ENCODE measurements at regions of chr6 and their contacts with region 1.

Region 1: GRCh38 chr6:39361657-39362486 is 39.4 kb upstream of the KCNK16 start:
- DNase-seq: peak; percentile 70 to 83 (median 78)
- H3K4me3 ChIP-seq: no peak overlapping the region
- H3K27ac ChIP-seq: peak overlapping the region in 2 of 5 donors; percentile 19 to 64
- H3K4me1 ChIP-seq: peaks cover 2 to 3% of the 10 kb centered on the region in 2 donors
- H3K27me3 ChIP-seq: no peaks in the 10 kb centered on the region
- CTCF ChIP-seq: peak; percentile 59 to 85 (median 75)
- POLR2A ChIP-seq: no peak

Region 2: DNA sequence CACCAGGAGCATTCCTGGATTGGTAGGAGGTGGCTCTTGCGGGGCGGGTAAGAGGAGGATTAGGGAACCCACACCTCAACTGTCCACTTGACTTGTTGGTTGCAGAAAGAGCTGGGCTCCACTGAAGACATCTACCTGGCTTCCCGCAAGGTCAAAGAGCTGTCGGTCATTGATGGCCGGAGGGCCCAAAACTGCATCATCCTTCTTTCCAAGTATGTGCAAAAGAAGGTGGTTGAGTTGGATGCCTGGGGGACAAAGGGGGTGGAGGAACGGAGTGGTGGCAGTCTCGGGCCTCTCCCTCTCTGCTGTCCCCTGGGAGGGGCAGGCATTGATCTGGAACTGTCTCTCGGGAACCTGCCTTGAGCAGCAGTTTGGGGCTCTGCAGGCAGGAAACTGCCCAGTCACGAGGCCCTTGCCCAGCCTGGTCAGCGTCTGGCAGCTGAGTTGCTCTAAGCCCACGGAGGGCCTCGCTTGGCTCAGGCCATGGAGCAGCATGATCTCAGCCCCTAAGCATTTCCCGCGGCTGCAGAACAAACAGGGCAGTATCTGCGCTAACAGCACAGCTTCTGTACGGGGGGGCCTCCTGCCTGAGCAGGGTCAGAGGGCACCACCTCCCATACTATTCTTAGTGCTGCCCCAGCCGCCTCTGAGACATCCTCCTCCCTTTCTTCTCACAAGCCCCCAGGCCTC is 525.7 kb after region 1 on chr6:
- intact Hi-C with region 1: loop called (anchors 5 to 10 kb)
- DNase-seq: peak; percentile 39 to 78 (median 54)
- H3K4me3 ChIP-seq: no peak overlapping the region
- H3K27ac ChIP-seq: peak overlapping the region in 3 of 5 donors; percentile 13 to 77 (median 58)
- H3K4me1 ChIP-seq: no peaks in the 10 kb centered on the region
- H3K27me3 ChIP-seq: no peaks in the 10 kb centered on the region
- CTCF ChIP-seq: no peak
- POLR2A ChIP-seq: no peak

Measured in adrenal gland (tissue), 19 donors.